ENCODE measurements at regions of chr18 and their contacts with region 1.

Region 1: GRCh38 chr18:63016270-63016669 is 300.9 kb downstream of the PHLPP1 start:
- DNase-seq: peak; percentile 62
- ATAC-seq: peak; percentile 62
- H3K4me3 Mint-ChIP-seq: no peak overlapping the region
- H3K27ac Mint-ChIP-seq: no peak overlapping the region
- H3K4me1 Mint-ChIP-seq: no peaks in the 10 kb centered on the region
- H3K27me3 Mint-ChIP-seq: peaks cover 9% of the 10 kb centered on the region
- CTCF ChIP-seq: peak; percentile 89

Region 2: GRCh38 chr18:63097178-63097577 is 80.9 kb after region 1 on chr18:
- CTCF ChIA-PET with region 1: interaction called, 13 read pairs
- POLR2A ChIA-PET with region 1: no interaction called
- intact Hi-C with region 1: no loop called
- DNase-seq: no peak
- ATAC-seq: no peak
- H3K4me3 Mint-ChIP-seq: no peak overlapping the region
- H3K27ac Mint-ChIP-seq: no peak overlapping the region
- H3K4me1 Mint-ChIP-seq: peaks cover 38% of the 10 kb centered on the region
- H3K27me3 Mint-ChIP-seq: no peaks in the 10 kb centered on the region
- CTCF ChIP-seq: no peak

Region 3: GRCh38 chr18:63131106-63131958 is 115.1 kb after region 1 on chr18:
- CTCF ChIA-PET with region 1: interaction called, 25 read pairs
- POLR2A ChIA-PET with region 1: no interaction called
- intact Hi-C with region 1: loop called (anchors 10 kb)
- DNase-seq: peak; percentile 79
- ATAC-seq: peak; percentile 59
- H3K4me3 Mint-ChIP-seq: no peak overlapping the region
- H3K27ac Mint-ChIP-seq: peak overlapping the region; percentile 79
- H3K4me1 Mint-ChIP-seq: peaks cover 41% of the 10 kb centered on the region
- H3K27me3 Mint-ChIP-seq: no peaks in the 10 kb centered on the region
- CTCF ChIP-seq: peak; percentile 83

Region 4: GRCh38 chr18:63253428-63254372 is 237.4 kb after region 1 on chr18:
- CTCF ChIA-PET with region 1: no interaction called
- POLR2A ChIA-PET with region 1: no interaction called
- intact Hi-C with region 1: no loop called
- DNase-seq: no peak
- ATAC-seq: peak; percentile 22
- H3K4me3 Mint-ChIP-seq: peak overlapping the region; percentile 7
- H3K27ac Mint-ChIP-seq: peak overlapping the region; percentile 79
- H3K4me1 Mint-ChIP-seq: peaks cover 75% of the 10 kb centered on the region
- H3K27me3 Mint-ChIP-seq: no peaks in the 10 kb centered on the region
- CTCF ChIP-seq: no peak

Region 5: DNA sequence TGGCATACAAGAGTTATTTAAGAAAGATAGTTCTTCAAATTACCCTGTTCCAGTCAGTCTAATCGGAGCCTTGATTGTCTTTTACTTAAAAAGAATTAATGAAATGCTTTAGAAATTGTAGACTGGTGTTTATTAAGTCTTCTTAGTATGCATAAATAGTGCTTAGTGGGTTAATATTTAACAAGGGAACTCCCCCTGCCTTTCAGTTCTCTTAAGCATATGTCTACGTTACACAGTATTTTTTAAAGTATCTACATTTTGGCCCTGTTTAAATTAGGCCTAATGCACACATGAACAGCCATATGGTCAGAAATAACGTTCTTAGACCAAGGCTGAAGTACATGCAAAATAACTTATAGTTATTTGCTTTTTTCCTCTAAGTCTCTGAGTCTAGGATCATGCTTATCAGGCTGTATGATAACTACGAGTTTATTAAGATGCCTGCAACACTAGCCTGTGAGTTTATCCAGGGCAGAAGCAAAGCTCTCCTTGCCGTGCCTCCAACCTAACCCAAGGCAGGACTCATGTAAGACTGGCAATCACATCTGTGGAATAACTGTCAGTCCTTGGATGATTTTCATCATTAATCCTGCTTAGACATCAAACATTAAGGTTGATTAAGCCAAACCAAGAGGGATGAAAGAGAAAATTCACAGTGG is 296.6 kb after region 1 on chr18:
- CTCF ChIA-PET with region 1: interaction called, 13 read pairs
- POLR2A ChIA-PET with region 1: interaction called, 4 read pairs
- intact Hi-C with region 1: no loop called
- DNase-seq: no peak
- ATAC-seq: no peak
- H3K4me3 Mint-ChIP-seq: peak overlapping the region; percentile 88
- H3K27ac Mint-ChIP-seq: peak overlapping the region; percentile 72
- H3K4me1 Mint-ChIP-seq: peaks cover 66% of the 10 kb centered on the region
- H3K27me3 Mint-ChIP-seq: no peaks in the 10 kb centered on the region
- CTCF ChIP-seq: no peak

Region 6: DNA sequence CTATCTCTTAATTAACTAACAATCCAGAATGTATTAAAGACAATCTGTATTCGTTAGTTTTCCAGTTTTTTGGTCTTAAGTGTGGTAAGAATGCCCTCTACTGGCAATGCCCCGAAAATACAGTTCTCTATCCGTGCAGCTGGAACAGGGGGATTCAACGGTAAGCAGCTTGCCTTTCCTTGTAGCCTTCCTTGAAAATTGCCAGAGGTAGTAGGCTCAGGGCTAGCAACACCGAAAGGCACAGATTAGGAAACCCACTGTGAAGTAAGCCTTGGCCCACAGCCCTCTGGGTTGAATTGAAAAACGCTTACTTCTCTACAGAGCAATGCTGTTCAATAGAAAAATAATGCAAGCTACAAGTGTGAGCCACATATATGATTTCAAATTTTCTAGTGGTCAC is 423.1 kb after region 1 on chr18:
- CTCF ChIA-PET with region 1: interaction called, 88 read pairs
- POLR2A ChIA-PET with region 1: no interaction called
- intact Hi-C with region 1: loop called (anchors 5 kb)
- DNase-seq: peak; percentile 58
- ATAC-seq: peak; percentile 75
- H3K4me3 Mint-ChIP-seq: no peak overlapping the region
- H3K27ac Mint-ChIP-seq: no peak overlapping the region
- H3K4me1 Mint-ChIP-seq: no peaks in the 10 kb centered on the region
- H3K27me3 Mint-ChIP-seq: peaks cover 2% of the 10 kb centered on the region
- CTCF ChIP-seq: peak; percentile 92